Head of caudate nucleus (tissue), 42 donors: ENCODE measurements at regions of chr1 and their contacts with region 1.

Region 1: DNA sequence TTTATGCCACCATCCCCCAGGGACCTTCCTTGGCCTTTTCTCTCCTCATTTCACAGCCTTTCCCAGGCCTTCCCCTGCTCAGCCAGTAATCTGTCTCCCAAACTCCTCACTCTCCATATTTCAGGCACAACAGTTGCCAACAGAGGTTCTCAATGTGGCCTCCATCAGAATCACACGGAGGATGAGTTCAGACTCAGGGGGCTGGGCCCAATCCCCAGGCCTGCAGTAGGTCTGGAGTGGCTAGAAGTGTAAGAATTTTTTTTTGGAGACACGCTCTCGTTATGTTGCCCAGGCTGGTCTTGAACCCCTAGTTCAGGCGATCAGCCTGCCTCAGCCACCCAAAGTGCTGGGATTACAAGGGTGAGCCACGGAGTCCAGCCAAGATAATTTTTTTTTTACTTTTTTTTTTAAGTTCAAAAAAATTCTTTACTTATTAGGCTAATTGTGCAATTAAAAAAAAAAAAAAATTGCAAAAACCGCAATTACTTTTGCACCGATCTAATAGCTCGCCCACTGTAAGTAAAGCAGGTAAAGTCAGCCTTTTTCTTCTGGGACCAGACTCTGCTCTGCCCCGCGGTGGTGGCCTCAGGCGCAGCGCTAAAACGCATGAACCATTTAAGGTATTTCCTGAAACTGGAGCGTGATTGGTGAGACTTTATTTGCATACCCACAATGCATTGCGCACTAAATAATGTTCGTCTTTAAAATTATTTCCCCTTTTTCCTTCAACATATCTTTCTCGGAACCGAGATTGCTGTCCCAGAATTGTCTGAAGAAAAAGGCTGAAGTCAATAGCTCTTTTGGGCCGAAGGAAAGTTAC is 18.7 kb downstream of the KIAA2013 start:
- DNase-seq: peak; percentile 76 to 97 (median 91)

Region 2: GRCh38 chr1:11434506-11434905 is 473.0 kb before region 1 on chr1:
- intact Hi-C with region 1: no loop called
- DNase-seq: no peak

Region 3: GRCh38 chr1:11893907-11894251 is 13.6 kb before region 1 on chr1:
- intact Hi-C with region 1: no loop called
- DNase-seq: peak in 41 of 42 donors; percentile 31 to 82 (median 62)

Region 4: GRCh38 chr1:11979851-11980675 is 72.6 kb after region 1 on chr1 and contains the start of gene MFN2:
- intact Hi-C with region 1: loop called (anchors 2 kb)
- DNase-seq: peak; percentile 87 to 97 (median 94)

Region 5: GRCh38 chr1:12095452-12096263 is 188.2 kb after region 1 on chr1:
- intact Hi-C with region 1: no loop called
- DNase-seq: no peak

Region 6: GRCh38 chr1:12124693-12125421 is 217.4 kb after region 1 on chr1:
- intact Hi-C with region 1: no loop called
- DNase-seq: peak; percentile 54 to 90 (median 78)